Ascending aorta (tissue), 2 donors: ENCODE measurements at regions of chr2 and their contacts with region 1.

Region 1: GRCh38 chr2:120566331-120567035 is 169.2 kb upstream of the GLI2 start:
- DNase-seq: peak; percentile 60 to 93
- H3K4me3 ChIP-seq: peak overlapping the region in 1 of 2 donors; percentile 49
- H3K27ac ChIP-seq: peak overlapping the region; percentile 49 to 50
- H3K4me1 ChIP-seq: peaks cover 9 to 25% of the 10 kb centered on the region in 2 donors
- H3K27me3 ChIP-seq: no peaks in the 10 kb centered on the region
- CTCF ChIP-seq: no peak

Region 2: GRCh38 chr2:120539937-120540718 is 26.4 kb before region 1 on chr2:
- intact Hi-C with region 1: loop called (anchors 1 kb)
- DNase-seq: peak; percentile 59 to 96
- H3K4me3 ChIP-seq: peak overlapping the region in 1 of 2 donors; percentile 2
- H3K27ac ChIP-seq: peak overlapping the region; percentile 9 to 43
- H3K4me1 ChIP-seq: peaks cover 10 to 19% of the 10 kb centered on the region in 2 donors
- H3K27me3 ChIP-seq: no peaks in the 10 kb centered on the region
- CTCF ChIP-seq: no peak

Region 3: DNA sequence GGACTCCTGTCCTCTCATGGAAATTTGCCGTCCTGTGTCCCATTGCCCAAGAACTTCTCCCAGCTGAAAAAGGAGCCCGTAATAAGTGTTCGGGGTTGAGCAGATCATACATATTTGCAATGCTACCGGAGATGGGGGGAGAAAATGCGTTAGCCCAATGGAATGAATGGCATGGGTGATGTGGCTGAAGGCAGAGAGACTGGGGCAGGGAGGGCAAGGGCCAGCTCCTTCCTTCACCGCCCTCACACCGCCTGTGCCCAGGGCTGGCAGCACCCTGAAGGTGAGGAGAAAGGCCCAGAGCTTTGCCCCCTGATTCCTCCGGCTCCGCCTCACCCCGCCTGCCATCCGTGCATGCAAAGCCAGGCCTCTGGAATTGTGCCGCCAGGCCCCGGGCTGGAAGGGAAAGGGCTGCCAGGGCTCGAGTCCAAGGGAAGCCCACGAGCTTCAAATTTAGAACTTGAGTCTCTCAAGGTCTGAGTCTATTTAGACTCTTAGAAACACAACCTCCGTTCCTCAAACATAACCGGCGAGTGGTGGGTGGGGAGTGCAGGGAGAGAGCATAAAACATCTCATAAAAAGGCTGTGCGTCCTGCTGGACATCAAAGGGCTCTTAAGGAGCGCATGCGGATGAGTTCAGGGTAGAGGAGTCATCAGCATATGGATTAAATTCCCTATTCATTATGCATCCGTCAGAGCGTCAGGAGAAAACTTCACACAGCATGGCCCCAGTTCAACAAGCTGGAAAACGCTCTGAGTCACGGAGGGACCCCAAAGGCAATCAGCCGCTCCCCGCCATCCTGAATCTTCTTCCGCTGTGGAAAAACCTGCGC is 47.5 kb after region 1 on chr2:
- intact Hi-C with region 1: loop called (anchors 1 kb)
- DNase-seq: peak in 1 of 2 donors; percentile 79
- H3K4me3 ChIP-seq: peak overlapping the region in 1 of 2 donors; percentile 25
- H3K27ac ChIP-seq: peak overlapping the region; percentile 49 to 74
- H3K4me1 ChIP-seq: peaks cover 0 to 19% of the 10 kb centered on the region in 2 donors
- H3K27me3 ChIP-seq: no peaks in the 10 kb centered on the region
- CTCF ChIP-seq: no peak

Region 4: DNA sequence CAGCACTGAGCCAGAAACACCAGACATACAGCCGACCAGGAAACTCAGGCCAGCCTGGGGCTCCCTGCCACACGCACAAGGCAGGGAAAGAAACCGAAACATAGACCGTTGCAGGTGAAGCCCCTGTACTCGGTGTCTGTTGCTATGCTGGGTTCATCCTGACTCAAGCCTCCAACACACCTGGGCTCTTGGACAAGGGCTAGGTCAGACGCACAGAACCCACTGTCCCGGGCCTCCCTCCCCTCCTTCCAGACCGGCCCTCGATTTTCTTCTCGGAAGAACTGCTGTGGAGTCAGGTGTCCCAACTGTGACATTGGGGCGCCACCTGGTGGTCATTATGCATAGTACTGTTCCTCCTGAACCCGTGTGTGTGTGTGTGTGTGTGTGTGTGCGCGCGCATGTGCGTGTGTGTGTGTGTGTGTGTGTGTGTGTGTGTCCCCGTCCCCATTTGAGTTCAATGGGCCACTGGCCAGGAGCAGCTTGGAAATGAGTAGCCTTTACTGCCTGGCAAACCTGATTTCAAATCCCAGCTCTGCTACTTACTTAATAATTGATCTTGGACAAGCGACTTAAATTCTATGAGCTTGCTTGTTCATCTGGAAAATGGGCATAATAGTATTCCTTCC is 113.8 kb after region 1 on chr2:
- intact Hi-C with region 1: loop called (anchors 5 kb)
- DNase-seq: peak in 1 of 2 donors; percentile 90
- H3K4me3 ChIP-seq: no peak overlapping the region
- H3K27ac ChIP-seq: no peak overlapping the region
- H3K4me1 ChIP-seq: peaks cover 0 to 5% of the 10 kb centered on the region in 2 donors
- H3K27me3 ChIP-seq: peaks cover 8% of the 10 kb centered on the region
- CTCF ChIP-seq: peak; percentile 57 to 75 (median 67)